ENCODE measurements at regions of chr19 and their contacts with region 1.

Region 1: GRCh38 chr19:11798391-11799330 is at the start of gene ZNF491:
- DNase-seq: peak; percentile 72 to 84 (median 73)
- H3K4me3 ChIP-seq: peak within 1 kb of the TSS in 1 of 2 donors; percentile 58
- H3K4me3 Mint-ChIP-seq: peak within 1 kb of the TSS; percentile 87 to 93 (median 90)
- H3K27ac ChIP-seq: peak within 1 kb of the TSS; percentile 64
- H3K27ac Mint-ChIP-seq: peak within 1 kb of the TSS; percentile 75 to 92 (median 88)
- H3K4me1 ChIP-seq: peaks cover 11% of the 10 kb centered on the region
- H3K4me1 Mint-ChIP-seq: peaks cover 10 to 18% (median 12%) of the 10 kb centered on the region in 4 donors
- H3K27me3 ChIP-seq: no peaks in the 10 kb centered on the region
- H3K27me3 Mint-ChIP-seq: no peaks in the 10 kb centered on the region
- total RNA-seq, gene ZNF491: 2.0 to 3.0 TPM

Region 2: GRCh38 chr19:11612816-11613511 is 185.7 kb before region 1 on chr19:
- CTCF ChIA-PET with region 1: no interaction called
- POLR2A ChIA-PET with region 1: no interaction called
- intact Hi-C with region 1: no loop called
- DNase-seq: no peak
- H3K4me3 ChIP-seq: no peak overlapping the region
- H3K4me3 Mint-ChIP-seq: no peak overlapping the region
- H3K27ac ChIP-seq: no peak overlapping the region
- H3K27ac Mint-ChIP-seq: peak overlapping the region in 1 of 7 donors; percentile 38
- H3K4me1 ChIP-seq: no peaks in the 10 kb centered on the region
- H3K4me1 Mint-ChIP-seq: peaks cover 0 to 8% (median 5%) of the 10 kb centered on the region in 4 donors
- H3K27me3 ChIP-seq: no peaks in the 10 kb centered on the region
- H3K27me3 Mint-ChIP-seq: no peaks in the 10 kb centered on the region

Region 3: DNA sequence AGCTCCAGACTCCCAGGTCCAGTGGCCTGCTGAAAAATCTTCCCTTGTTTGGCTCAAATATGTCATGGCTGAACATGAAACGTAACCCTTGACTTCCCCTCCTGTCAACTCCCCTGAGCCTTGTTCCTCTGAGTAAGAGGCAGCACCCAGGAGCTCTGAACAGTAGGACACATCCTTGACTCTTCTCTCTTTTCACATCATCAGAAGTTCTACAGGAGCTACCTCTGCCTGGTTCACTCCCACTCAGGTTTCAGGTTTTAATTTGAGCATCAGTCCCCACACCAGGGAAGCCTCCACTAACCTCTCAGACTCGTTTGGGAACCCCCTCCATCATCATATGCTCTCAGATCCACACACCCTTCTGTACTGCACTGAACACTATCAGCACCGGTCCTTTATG is 90.2 kb before region 1 on chr19:
- CTCF ChIA-PET with region 1: no interaction called
- POLR2A ChIA-PET with region 1: no interaction called
- intact Hi-C with region 1: no loop called
- DNase-seq: no peak
- H3K4me3 ChIP-seq: no peak overlapping the region
- H3K4me3 Mint-ChIP-seq: no peak overlapping the region
- H3K27ac ChIP-seq: no peak overlapping the region
- H3K27ac Mint-ChIP-seq: no peak overlapping the region
- H3K4me1 ChIP-seq: no peaks in the 10 kb centered on the region
- H3K4me1 Mint-ChIP-seq: no peaks in the 10 kb centered on the region
- H3K27me3 ChIP-seq: no peaks in the 10 kb centered on the region
- H3K27me3 Mint-ChIP-seq: peaks cover 0 to 2% of the 10 kb centered on the region in 2 donors

Region 4: DNA sequence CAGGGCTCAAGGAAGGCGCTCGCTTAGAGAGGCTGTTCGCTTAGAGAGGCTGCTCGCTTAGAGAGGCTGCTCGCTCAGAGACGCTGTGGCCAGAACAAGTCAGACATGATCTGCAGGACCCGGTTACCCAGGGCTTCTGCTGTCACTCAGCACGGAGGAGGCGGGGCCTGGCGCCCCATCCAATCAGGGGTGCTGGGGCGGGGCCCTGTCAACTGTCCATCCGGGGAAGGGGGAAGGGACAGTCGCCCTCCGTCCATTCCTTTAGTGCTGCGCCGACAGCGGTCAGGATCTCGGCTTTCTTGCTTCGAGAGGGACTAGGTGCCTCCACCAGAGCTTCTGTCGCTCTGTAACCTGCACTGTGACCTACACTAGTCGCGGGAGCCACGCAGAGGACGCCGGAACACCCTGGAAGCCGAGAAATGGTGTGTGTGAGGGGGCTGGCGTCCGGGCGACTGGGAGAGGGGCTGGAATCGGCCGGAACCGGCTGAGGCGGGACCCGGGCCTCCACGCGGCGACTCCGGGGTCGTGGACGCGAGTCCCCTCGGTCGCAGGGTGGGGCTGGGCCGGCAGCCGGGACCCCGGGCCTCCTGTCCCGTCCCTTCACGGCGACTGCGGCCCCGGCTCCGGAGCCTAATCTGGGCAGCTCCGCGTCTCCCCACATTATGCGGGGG is 15.5 kb after region 1 on chr19 and contains the start of gene ZNF440:
- CTCF ChIA-PET with region 1: interaction called, 92 read pairs
- POLR2A ChIA-PET with region 1: interaction called, 6 read pairs
- intact Hi-C with region 1: loop called (anchors 1 kb)
- DNase-seq: peak; percentile 74 to 82 (median 74)
- H3K4me3 ChIP-seq: peak within 1 kb of the TSS; percentile 64 to 89
- H3K4me3 Mint-ChIP-seq: peak within 1 kb of the TSS; percentile 93 to 96 (median 95)
- H3K27ac ChIP-seq: peak within 1 kb of the TSS; percentile 56
- H3K27ac Mint-ChIP-seq: peak within 1 kb of the TSS; percentile 55 to 91 (median 86)
- H3K4me1 ChIP-seq: peaks cover 17% of the 10 kb centered on the region
- H3K4me1 Mint-ChIP-seq: peaks cover 13 to 29% (median 21%) of the 10 kb centered on the region in 4 donors
- H3K27me3 ChIP-seq: no peaks in the 10 kb centered on the region
- H3K27me3 Mint-ChIP-seq: no peaks in the 10 kb centered on the region
- total RNA-seq, gene ZNF440: 18.0 to 18.5 TPM

Region 5: GRCh38 chr19:11832253-11832912 is 33.7 kb after region 1 on chr19:
- CTCF ChIA-PET with region 1: no interaction called
- POLR2A ChIA-PET with region 1: no interaction called
- intact Hi-C with region 1: no loop called
- DNase-seq: no peak
- H3K4me3 ChIP-seq: no peak overlapping the region
- H3K4me3 Mint-ChIP-seq: no peak overlapping the region
- H3K27ac ChIP-seq: no peak overlapping the region
- H3K27ac Mint-ChIP-seq: peak overlapping the region in 1 of 7 donors; percentile 48
- H3K4me1 ChIP-seq: no peaks in the 10 kb centered on the region
- H3K4me1 Mint-ChIP-seq: no peaks in the 10 kb centered on the region
- H3K27me3 ChIP-seq: no peaks in the 10 kb centered on the region
- H3K27me3 Mint-ChIP-seq: no peaks in the 10 kb centered on the region

Region 6: DNA sequence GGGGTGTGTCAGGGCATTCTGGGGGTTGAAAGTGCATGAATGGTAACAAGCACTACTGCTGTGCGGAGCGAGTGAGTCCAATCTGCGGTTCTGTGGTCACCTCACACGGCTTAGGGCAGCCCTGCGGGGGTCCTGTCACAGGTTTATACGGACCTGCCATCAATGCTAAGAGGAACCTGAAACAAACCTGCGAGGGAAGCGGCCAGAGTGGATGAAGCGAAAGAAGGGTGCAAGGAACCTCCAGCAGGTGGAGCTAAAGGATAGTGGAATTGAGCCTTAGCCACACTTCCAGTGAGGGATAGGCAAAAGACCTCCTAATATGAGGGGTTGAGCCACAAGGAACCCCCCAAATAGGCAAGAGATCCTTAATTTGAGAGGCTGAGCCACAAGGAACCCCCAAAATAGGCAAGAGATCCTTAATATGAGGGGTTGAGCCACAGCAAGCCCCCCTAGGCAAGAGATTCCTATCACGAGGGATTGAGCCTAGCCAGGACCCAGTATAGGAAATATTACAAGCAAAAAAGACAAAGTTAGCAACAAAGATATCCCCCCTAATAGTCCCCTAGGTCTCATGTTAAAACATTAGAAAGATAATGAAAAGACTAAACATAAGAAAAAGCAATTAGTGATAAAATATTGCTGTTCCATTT is 82.6 kb after region 1 on chr19:
- CTCF ChIA-PET with region 1: interaction called, 15 read pairs
- POLR2A ChIA-PET with region 1: no interaction called
- intact Hi-C with region 1: loop called (anchors 2 kb)
- DNase-seq: peak; percentile 52 to 67 (median 59)
- H3K4me3 ChIP-seq: no peak overlapping the region
- H3K4me3 Mint-ChIP-seq: peak overlapping the region in 1 of 8 donors; percentile 24
- H3K27ac ChIP-seq: no peak overlapping the region
- H3K27ac Mint-ChIP-seq: no peak overlapping the region
- H3K4me1 ChIP-seq: peaks cover 3% of the 10 kb centered on the region
- H3K4me1 Mint-ChIP-seq: peaks cover 0 to 2% (median under 1%) of the 10 kb centered on the region in 4 donors
- H3K27me3 ChIP-seq: no peaks in the 10 kb centered on the region
- H3K27me3 Mint-ChIP-seq: peaks cover 0 to 1% of the 10 kb centered on the region in 2 donors

Region 7: DNA sequence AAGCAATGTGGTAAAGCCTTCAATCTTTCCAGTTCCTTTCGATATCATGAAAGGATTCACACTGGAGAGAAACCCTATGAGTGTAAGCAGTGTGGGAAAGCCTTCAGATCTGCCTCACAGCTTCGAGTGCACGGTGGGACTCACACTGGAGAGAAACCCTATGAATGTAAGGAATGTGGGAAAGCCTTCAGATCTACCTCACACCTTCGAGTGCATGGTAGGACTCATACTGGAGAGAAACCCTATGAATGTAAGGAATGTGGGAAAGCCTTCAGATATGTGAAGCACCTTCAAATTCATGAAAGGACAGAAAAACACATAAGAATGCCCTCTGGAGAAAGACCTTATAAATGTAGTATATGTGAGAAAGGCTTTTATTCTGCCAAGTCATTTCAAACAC is 150.5 kb after region 1 on chr19:
- CTCF ChIA-PET with region 1: no interaction called
- POLR2A ChIA-PET with region 1: no interaction called
- intact Hi-C with region 1: no loop called
- DNase-seq: peak in 3 of 5 donors; percentile 4 to 8 (median 5)
- H3K4me3 ChIP-seq: peak overlapping the region in 1 of 2 donors; percentile 27
- H3K4me3 Mint-ChIP-seq: peak overlapping the region in 1 of 8 donors; percentile 27
- H3K27ac ChIP-seq: no peak overlapping the region
- H3K27ac Mint-ChIP-seq: peak overlapping the region in 2 of 7 donors; percentile 23 to 65
- H3K4me1 ChIP-seq: no peaks in the 10 kb centered on the region
- H3K4me1 Mint-ChIP-seq: no peaks in the 10 kb centered on the region
- H3K27me3 ChIP-seq: no peaks in the 10 kb centered on the region
- H3K27me3 Mint-ChIP-seq: no peaks in the 10 kb centered on the region

Region 8: GRCh38 chr19:11964858-11965645 is 166.4 kb after region 1 on chr19 and contains the start of gene ZNF763:
- CTCF ChIA-PET with region 1: interaction called, 10 read pairs
- POLR2A ChIA-PET with region 1: interaction called, 4 read pairs
- intact Hi-C with region 1: no loop called
- DNase-seq: peak; percentile 83 to 93 (median 85)
- H3K4me3 ChIP-seq: peak within 1 kb of the TSS; percentile 79 to 86
- H3K4me3 Mint-ChIP-seq: peak within 1 kb of the TSS; percentile 93 to 98 (median 96)
- H3K27ac ChIP-seq: peak within 1 kb of the TSS; percentile 91
- H3K27ac Mint-ChIP-seq: peak within 1 kb of the TSS; percentile 92 to 97 (median 96)
- H3K4me1 ChIP-seq: peaks cover 21% of the 10 kb centered on the region
- H3K4me1 Mint-ChIP-seq: peaks cover 16 to 32% (median 26%) of the 10 kb centered on the region in 4 donors
- H3K27me3 ChIP-seq: no peaks in the 10 kb centered on the region
- H3K27me3 Mint-ChIP-seq: no peaks in the 10 kb centered on the region
- total RNA-seq, gene ZNF763: 14.3 to 16.4 TPM

Region 9: GRCh38 chr19:12052497-12053169 is 254.0 kb after region 1 on chr19 and contains the start of gene ZNF878:
- CTCF ChIA-PET with region 1: interaction called, 4 read pairs
- POLR2A ChIA-PET with region 1: interaction called, 3 read pairs
- intact Hi-C with region 1: loop called (anchors 5 kb)
- DNase-seq: peak in 3 of 5 donors; percentile 13 to 23 (median 15)
- H3K4me3 ChIP-seq: peak within 1 kb of the TSS; percentile 30 to 55
- H3K4me3 Mint-ChIP-seq: peak within 1 kb of the TSS; percentile 82 to 90 (median 87)
- H3K27ac ChIP-seq: no peak within 1 kb of the TSS
- H3K27ac Mint-ChIP-seq: peak within 1 kb of the TSS in 3 of 7 donors; percentile 9 to 88 (median 66)
- H3K4me1 ChIP-seq: peaks cover 13% of the 10 kb centered on the region
- H3K4me1 Mint-ChIP-seq: peaks cover 8 to 13% (median 11%) of the 10 kb centered on the region in 4 donors
- H3K27me3 ChIP-seq: no peaks in the 10 kb centered on the region
- H3K27me3 Mint-ChIP-seq: peaks cover 11 to 19% of the 10 kb centered on the region in 2 donors
- total RNA-seq, gene ZNF878: not detected

Measured in CD4-positive, alpha-beta memory T cell (primary cell).